ENCODE measurements at regions of chr3 and their contacts with region 1.

Region 1: GRCh38 chr3:108552267-108553159 is 36.7 kb downstream of the CIP2A start:
- DNase-seq: no peak
- H3K4me3 ChIP-seq: no peak overlapping the region
- H3K27ac ChIP-seq: no peak overlapping the region
- H3K4me1 ChIP-seq: no peaks in the 10 kb centered on the region
- H3K27me3 ChIP-seq: no peaks in the 10 kb centered on the region
- CTCF ChIP-seq: peak in 2 of 3 experiments; percentile 13 to 15; a peak in 2 of 4 replicates
- EP300 ChIP-seq: no peak
- POLR2A ChIP-seq: no peak
- RAD21 ChIP-seq: peak in 1 of 2 experiments; percentile 46; a peak in 3 of 4 replicates

Region 2: DNA sequence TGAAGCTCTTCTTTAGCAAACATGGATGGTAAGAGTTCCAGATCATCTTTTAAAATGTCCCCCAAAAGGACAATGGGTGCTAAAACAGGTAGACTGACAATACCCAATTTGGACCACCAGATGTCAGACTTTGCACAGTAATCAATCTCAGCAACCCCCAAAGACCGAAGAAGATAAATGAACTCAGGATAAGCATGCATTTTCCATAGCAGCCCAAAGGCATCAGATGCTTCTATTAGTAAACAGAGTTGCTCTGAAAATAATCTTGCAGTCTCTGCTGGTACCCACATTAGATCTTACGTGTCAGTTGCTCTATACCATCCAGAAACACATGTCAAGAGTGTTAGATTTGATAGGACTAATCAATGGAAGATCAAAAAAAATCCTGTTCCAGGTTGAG is 62.7 kb before region 1 on chr3:
- CTCF ChIA-PET with region 1: interaction called, 91 read pairs
- POLR2A ChIA-PET with region 1: no interaction called
- DNase-seq: no peak
- H3K4me3 ChIP-seq: no peak overlapping the region
- H3K27ac ChIP-seq: no peak overlapping the region
- H3K4me1 ChIP-seq: peaks cover 0 to 9% (median 8%) of the 10 kb centered on the region in 4 experiments; a peak in 4 of 7 replicates
- H3K27me3 ChIP-seq: no peaks in the 10 kb centered on the region
- CTCF ChIP-seq: peak in 2 of 3 experiments; percentile 77 to 78; a peak in 3 of 4 replicates
- EP300 ChIP-seq: no peak
- POLR2A ChIP-seq: no peak
- RAD21 ChIP-seq: peak; percentile 94 to 96

Region 3: DNA sequence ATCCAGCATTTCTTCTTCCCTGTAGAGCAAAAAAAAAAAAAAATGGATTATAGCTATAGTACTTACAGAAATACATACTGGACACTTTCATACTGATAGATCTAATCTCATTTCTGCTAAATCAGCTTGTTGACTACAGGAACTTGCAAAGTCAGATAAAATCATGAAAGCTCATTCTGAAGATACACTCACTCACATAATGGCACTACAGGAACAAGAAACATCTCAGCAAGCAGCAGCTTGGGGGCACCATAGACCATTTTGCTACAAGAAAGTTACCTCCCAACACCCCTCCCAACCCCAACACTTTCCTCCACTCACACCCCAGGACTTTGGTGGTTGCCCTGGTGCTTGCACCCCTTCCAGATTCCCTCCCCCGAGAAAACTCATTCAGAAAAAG is 46.7 kb before region 1 on chr3:
- CTCF ChIA-PET with region 1: interaction called, 42 read pairs
- POLR2A ChIA-PET with region 1: no interaction called
- DNase-seq: no peak
- H3K4me3 ChIP-seq: no peak overlapping the region
- H3K27ac ChIP-seq: no peak overlapping the region
- H3K4me1 ChIP-seq: no peaks in the 10 kb centered on the region
- H3K27me3 ChIP-seq: no peaks in the 10 kb centered on the region
- CTCF ChIP-seq: peak in 2 of 3 experiments; percentile 37 to 39; a peak in 3 of 4 replicates
- EP300 ChIP-seq: no peak
- POLR2A ChIP-seq: no peak
- RAD21 ChIP-seq: peak; percentile 51 to 62

Region 4: GRCh38 chr3:108528459-108529252 is 23.9 kb before region 1 on chr3:
- CTCF ChIA-PET with region 1: interaction called, 24 read pairs
- POLR2A ChIA-PET with region 1: no interaction called
- DNase-seq: no peak
- H3K4me3 ChIP-seq: no peak overlapping the region
- H3K27ac ChIP-seq: no peak overlapping the region
- H3K4me1 ChIP-seq: no peaks in the 10 kb centered on the region
- H3K27me3 ChIP-seq: no peaks in the 10 kb centered on the region
- CTCF ChIP-seq: no peak
- EP300 ChIP-seq: no peak
- POLR2A ChIP-seq: no peak
- RAD21 ChIP-seq: no peak